Psoas muscle (tissue), 8 donors: ENCODE measurements at regions of chr11 and their contacts with region 1.

Region 1: GRCh38 chr11:7513234-7514098 is at the start of gene PPFIBP2:
- DNase-seq: peak; percentile 86 to 91
- ATAC-seq: peak; percentile 83 to 85 (median 84)
- H3K4me3 ChIP-seq: peak within 1 kb of the TSS; percentile 84
- H3K27ac ChIP-seq: peak within 1 kb of the TSS; percentile 93
- H3K4me1 ChIP-seq: peaks cover 31% of the 10 kb centered on the region
- H3K27me3 ChIP-seq: no peaks in the 10 kb centered on the region
- CTCF ChIP-seq: peak; percentile 62
- total RNA-seq, gene PPFIBP2: 19.7 to 54.8 (median 32.5) TPM

Region 2: DNA sequence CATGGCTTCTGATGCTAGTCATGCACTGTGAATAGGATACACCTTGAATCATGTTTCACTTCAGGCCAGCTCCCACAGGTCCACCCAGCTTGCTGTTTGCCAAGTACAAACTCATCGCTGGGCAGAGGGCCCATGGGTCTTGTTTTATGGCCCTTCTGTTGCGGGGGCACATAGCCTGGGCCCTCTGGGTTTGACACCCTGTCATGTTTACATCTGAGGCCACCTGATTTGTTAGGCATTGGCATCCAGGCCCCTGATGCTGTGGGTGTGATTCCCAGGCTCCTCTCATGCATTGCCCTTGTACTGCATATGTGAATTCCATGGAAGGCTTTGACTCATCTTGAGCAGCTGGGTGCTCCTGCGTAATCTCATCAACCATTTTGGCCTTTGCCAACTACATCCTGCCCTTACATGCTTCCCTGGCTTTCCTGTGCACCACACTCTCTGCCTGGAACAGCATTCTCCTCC is 32.9 kb after region 1 on chr11:
- intact Hi-C with region 1: loop called (anchors 2 kb)
- DNase-seq: peak; percentile 31 to 90
- ATAC-seq: peak; percentile 89 to 94 (median 90)
- H3K4me3 ChIP-seq: no peak overlapping the region
- H3K27ac ChIP-seq: peak overlapping the region; percentile 86
- H3K4me1 ChIP-seq: peaks cover 47% of the 10 kb centered on the region
- H3K27me3 ChIP-seq: no peaks in the 10 kb centered on the region
- CTCF ChIP-seq: no peak

Region 3: GRCh38 chr11:7555052-7555699 is 41.7 kb after region 1 on chr11:
- intact Hi-C with region 1: loop called in 1 of 2 experiments (anchors 2 kb)
- DNase-seq: peak; percentile 80 to 94
- ATAC-seq: peak; percentile 95 to 98 (median 97)
- H3K4me3 ChIP-seq: no peak overlapping the region
- H3K27ac ChIP-seq: peak overlapping the region; percentile 72
- H3K4me1 ChIP-seq: peaks cover 28% of the 10 kb centered on the region
- H3K27me3 ChIP-seq: no peaks in the 10 kb centered on the region
- CTCF ChIP-seq: no peak

Region 4: DNA sequence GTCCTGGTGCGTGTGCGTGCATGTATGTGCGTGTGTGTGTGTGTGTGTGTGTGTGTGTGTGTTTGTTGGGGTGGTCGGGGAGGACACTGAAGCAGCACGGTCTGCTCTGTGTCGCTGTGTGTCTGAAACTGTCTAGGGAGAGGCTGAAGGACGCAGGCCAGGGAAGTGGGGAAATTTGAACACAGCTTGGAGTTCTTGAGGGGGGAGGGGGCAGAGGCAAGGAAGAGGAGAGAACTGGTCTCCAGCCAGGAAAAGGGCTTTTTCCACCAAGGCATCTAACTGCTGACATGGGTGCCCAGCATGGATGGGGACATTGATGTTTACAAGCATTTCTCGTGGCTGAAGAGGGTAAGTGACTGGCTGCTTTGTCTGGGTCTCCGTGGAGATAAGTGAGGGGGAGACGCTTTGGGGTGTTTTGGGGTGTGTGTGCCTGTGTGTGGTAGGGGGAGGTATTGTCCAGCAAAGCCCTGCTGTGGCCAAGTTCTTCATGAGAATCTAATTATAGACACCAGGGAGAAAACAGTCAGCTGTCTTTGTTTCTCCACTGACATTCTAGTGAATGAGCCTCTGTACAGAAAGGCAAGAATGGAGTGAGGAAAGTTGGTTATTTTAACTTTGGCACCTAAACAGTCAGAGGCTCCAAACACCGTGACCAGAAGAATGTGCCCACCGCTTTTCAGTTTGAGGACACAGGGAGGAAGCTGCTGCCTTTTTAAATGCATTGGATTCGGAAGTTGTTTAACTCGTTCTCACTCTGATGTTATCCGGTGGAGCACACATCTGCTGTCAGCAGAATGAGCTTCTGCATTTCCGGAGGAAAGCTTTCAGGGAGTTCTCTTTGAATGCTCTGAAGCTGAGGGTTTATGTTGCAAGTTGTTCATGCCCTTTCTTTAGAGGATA is 64.1 kb after region 1 on chr11:
- intact Hi-C with region 1: loop called in 1 of 2 experiments (anchors 2 kb)
- DNase-seq: peak; percentile 65 to 72
- ATAC-seq: peak; percentile 66 to 78 (median 74)
- H3K4me3 ChIP-seq: peak overlapping the region; percentile 64
- H3K27ac ChIP-seq: peak overlapping the region; percentile 90
- H3K4me1 ChIP-seq: peaks cover 74% of the 10 kb centered on the region
- H3K27me3 ChIP-seq: no peaks in the 10 kb centered on the region
- CTCF ChIP-seq: no peak

Region 5: DNA sequence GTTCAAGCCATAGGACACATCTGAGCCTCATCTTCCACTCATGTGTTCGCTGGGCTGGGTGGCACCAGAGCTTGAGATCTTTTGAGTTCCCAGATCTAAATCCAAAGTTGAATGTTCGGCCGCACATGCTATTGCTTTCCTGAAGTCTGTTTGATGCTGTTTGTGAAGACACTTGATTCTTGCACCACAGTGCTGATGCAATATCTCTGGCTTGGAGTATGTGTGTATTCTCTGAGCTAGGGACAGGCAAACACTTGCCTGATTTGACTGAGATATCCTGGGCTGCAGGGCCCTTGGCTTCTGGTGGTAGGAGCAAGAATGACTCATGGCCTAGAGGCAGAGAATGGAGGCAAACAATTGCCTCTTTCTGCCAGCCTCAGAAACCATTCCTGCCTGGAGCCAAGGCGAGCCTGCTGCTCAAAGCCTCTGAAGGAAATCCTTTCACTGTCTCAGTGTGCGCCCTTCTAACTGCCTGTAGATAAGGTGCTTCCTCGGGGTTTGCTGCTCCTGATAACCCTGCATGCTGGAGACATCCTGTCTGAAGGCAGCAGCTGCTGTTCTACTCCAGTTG is 86.8 kb after region 1 on chr11:
- intact Hi-C with region 1: loop called in 1 of 2 experiments (anchors 5 kb)
- DNase-seq: peak; percentile 56 to 75
- ATAC-seq: peak; percentile 89 to 95 (median 94)
- H3K4me3 ChIP-seq: no peak overlapping the region
- H3K27ac ChIP-seq: peak overlapping the region; percentile 81
- H3K4me1 ChIP-seq: peaks cover 44% of the 10 kb centered on the region
- H3K27me3 ChIP-seq: no peaks in the 10 kb centered on the region
- CTCF ChIP-seq: no peak

Region 6: DNA sequence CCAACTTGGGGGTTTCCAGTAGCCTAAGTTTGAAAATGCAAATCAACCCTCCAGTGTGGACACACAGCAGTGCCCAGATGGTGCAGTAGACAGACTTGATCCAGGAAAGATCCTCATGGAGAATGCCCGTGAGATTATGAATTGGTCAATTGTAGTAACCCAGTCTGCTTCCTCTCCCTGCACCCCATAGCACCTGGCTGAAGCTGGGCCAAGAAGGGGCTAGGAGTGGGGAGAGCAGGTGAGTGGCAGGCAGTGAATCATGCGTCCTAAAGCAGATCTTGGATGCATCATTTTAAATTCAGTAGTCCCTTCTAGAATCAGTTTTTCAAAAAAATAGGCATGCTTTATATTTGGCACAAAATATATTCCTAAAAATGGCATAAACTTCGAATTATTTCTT is 107.6 kb after region 1 on chr11:
- intact Hi-C with region 1: no loop called
- DNase-seq: no peak
- ATAC-seq: no peak
- H3K4me3 ChIP-seq: no peak overlapping the region
- H3K27ac ChIP-seq: no peak overlapping the region
- H3K4me1 ChIP-seq: no peaks in the 10 kb centered on the region
- H3K27me3 ChIP-seq: no peaks in the 10 kb centered on the region
- CTCF ChIP-seq: no peak

Region 7: DNA sequence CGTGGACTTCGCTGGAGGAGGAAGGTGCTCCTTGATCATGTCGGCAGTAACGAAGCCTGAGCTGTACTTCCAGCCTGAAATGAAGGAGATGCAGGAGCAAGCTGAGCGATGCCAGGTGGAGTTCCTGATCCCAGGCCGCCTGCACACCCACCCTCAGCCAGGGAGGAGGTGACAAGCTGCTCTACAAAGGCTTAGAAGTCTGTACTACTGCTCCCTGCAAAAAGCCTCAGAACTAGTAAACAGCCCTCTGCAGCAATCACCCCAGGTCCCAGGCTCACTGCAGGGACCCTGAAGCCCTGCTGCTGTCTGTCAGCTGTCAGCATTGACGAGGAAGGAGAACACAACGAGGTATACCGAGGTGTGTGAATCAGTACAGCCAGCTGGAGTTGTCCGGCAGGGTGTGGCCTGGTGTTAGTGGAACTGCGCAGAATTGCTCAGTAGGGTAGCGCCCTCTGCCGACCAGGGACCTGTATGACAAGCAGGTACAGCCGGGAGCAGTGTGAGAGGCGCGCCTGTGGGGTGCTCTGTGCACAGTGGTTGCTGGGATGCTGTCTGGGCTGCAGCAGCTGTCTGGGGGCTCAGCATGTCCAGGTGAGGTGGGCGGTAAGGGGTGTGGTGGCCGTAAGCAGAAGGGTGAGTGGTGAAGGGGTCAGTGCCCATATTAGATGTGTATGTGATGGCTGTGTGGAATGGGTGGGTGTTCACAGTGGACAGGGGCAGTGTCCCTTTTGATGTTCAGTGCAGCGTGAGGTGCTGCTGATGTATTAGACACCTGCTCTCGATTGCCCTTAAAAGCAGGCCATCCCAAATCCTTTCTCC is 152.2 kb after region 1 on chr11:
- intact Hi-C with region 1: loop called in 1 of 2 experiments (anchors 5 kb)
- DNase-seq: peak; percentile 79 to 87
- ATAC-seq: peak; percentile 95 to 99 (median 98)
- H3K4me3 ChIP-seq: no peak overlapping the region
- H3K27ac ChIP-seq: no peak overlapping the region
- H3K4me1 ChIP-seq: no peaks in the 10 kb centered on the region
- H3K27me3 ChIP-seq: no peaks in the 10 kb centered on the region
- CTCF ChIP-seq: peak; percentile 81